ENCODE measurements at regions of chr19 and their contacts with region 1.

Region 1: GRCh38 chr19:29610563-29611271 is 4.6 kb downstream of the POP4 start:
- DNase-seq: peak; percentile 63
- H3K4me3 ChIP-seq: no peak overlapping the region
- H3K27ac ChIP-seq: no peak overlapping the region
- H3K27me3 ChIP-seq: no peaks in the 10 kb centered on the region
- CTCF ChIP-seq: peak; percentile 91

Region 2: DNA sequence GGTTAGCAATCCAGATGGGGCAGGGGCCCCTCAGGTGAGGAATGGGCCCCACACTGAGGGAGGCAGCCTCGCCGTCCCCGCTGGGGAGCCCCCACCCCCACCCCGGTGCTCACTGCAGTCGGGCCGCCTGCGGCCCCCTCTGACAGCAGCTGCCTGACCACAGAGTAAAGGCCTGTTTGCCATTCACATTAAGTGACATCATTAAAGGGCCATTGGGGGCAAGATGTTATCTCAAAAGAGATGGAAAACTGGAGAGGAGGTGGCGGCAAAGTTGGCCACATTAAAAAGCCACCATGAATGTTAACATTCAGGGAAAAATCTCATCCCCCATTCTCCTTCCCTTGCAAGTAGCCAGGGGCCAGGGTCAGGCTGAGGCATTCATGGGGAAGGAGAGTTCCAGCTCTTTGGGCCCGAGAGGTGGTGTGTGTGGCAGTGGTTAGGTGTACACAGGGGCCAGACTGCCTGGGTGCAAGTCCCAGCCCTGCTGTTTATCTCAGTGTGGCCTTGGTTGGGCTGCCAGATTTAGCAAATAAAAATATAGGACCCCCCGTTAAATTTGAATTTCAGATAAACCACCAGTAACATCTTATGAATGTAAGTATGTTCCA is 64.0 kb before region 1 on chr19:
- CTCF ChIA-PET with region 1: no interaction called
- POLR2A ChIA-PET with region 1: no interaction called
- DNase-seq: no peak
- H3K4me3 ChIP-seq: no peak overlapping the region
- H3K27ac ChIP-seq: no peak overlapping the region
- H3K27me3 ChIP-seq: no peaks in the 10 kb centered on the region
- CTCF ChIP-seq: no peak

Region 3: DNA sequence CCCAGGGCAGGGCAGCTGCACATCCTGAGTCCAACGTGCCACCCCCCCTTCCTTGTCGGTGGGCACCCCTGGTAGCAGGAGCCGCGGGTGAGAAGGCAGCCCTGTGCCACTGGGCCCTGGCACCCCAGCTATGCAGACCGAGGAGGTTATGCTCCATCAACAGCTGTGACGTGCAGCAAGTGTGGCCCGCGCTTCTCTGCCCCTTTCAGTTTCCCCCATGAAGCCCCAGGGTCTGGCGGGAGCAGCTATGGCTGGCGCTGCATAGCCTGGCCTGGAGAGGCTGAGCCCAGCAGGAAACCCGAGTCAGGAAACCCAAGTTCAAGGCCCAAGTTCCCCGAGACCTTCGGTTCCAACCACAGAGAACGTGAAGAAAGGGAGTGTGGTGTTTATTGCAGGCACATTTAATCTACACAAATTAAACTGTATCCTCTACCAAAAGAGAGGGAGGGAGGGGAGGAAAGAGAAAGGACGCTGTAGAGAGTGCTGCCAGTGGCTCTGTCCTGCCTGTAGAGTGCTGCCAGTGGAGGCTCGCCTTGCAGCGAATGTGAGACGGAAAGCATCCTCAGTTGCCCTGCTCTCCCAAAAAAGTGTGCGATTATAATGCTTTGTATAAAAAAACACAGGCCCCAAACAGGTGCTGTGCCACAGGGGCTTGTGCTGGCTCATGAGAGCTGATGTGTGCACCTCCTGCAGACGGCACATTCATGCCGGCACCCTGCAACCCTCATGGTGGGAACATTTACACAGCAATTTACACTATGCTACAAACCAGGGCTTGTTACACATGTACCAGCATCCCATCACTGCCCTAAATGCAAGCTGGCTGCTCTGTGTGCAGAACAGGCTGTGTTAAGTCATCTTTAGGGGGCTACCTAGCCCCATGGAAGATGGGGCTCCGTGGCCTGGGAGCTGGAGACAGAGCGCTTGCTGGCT is 11.7 kb after region 1 on chr19:
- CTCF ChIA-PET with region 1: interaction called, 17 read pairs
- POLR2A ChIA-PET with region 1: interaction called, 3 read pairs
- DNase-seq: no peak
- H3K4me3 ChIP-seq: no peak overlapping the region
- H3K27ac ChIP-seq: no peak overlapping the region
- H3K27me3 ChIP-seq: peaks cover 9% of the 10 kb centered on the region
- CTCF ChIP-seq: no peak

Region 4: GRCh38 chr19:29645911-29646310 is 35.2 kb after region 1 on chr19:
- CTCF ChIA-PET with region 1: interaction called, 12 read pairs
- POLR2A ChIA-PET with region 1: no interaction called
- DNase-seq: no peak
- H3K4me3 ChIP-seq: no peak overlapping the region
- H3K27ac ChIP-seq: no peak overlapping the region
- H3K27me3 ChIP-seq: peaks cover 5% of the 10 kb centered on the region
- CTCF ChIP-seq: no peak

Region 5: GRCh38 chr19:29671393-29672160 is 60.9 kb after region 1 on chr19:
- CTCF ChIA-PET with region 1: interaction called, 21 read pairs
- POLR2A ChIA-PET with region 1: interaction called, 11 read pairs
- DNase-seq: no peak
- H3K4me3 ChIP-seq: no peak overlapping the region
- H3K27ac ChIP-seq: no peak overlapping the region
- H3K27me3 ChIP-seq: no peaks in the 10 kb centered on the region
- CTCF ChIP-seq: 0 out of 2 replicates have a peak, but pooled peaks have one; percentile 6

Region 6: GRCh38 chr19:29694669-29695627 is 84.2 kb after region 1 on chr19:
- CTCF ChIA-PET with region 1: interaction called, 31 read pairs
- POLR2A ChIA-PET with region 1: interaction called, 4 read pairs
- DNase-seq: no peak
- H3K4me3 ChIP-seq: no peak overlapping the region
- H3K27ac ChIP-seq: no peak overlapping the region
- H3K27me3 ChIP-seq: no peaks in the 10 kb centered on the region
- CTCF ChIP-seq: peak; percentile 91

Region 7: GRCh38 chr19:29724102-29724641 is 113.5 kb after region 1 on chr19:
- CTCF ChIA-PET with region 1: interaction called, 550 read pairs
- POLR2A ChIA-PET with region 1: no interaction called
- DNase-seq: no peak
- H3K4me3 ChIP-seq: peak overlapping the region; percentile 44
- H3K27ac ChIP-seq: no peak overlapping the region
- H3K27me3 ChIP-seq: peaks cover 31% of the 10 kb centered on the region
- CTCF ChIP-seq: 0 out of 2 replicates have a peak, but pooled peaks have one; percentile 5